ENCODE measurements at regions of chr3 and their contacts with region 1.

Region 1: DNA sequence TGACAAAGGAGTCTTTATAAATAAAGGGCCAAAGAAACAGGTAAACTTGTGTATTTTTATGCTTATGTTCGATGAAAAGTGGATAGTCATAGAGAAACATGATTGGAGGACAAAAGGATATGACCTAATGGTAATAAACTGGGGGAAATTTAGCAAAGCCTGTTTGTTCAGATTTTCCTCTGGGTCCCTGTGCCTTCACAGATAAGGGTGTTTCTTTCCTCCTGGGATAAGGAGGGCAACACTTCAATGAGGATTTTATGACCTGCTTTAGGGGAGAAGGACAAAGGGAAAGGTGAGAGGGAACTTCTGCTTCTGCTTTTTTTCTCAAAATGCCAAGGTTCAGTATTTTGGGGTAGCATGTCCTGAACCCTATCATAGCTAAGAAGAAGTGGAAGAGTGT is 531.3 kb upstream of the ALCAM start:
- DNase-seq: no peak
- ATAC-seq: no peak
- H3K4me3 ChIP-seq: no peak overlapping the region
- H3K4me3 Mint-ChIP-seq: no peak overlapping the region
- H3K27ac ChIP-seq: no peak overlapping the region
- H3K27ac Mint-ChIP-seq: no peak overlapping the region
- H3K4me1 ChIP-seq: no peaks in the 10 kb centered on the region
- H3K4me1 Mint-ChIP-seq: no peaks in the 10 kb centered on the region
- H3K27me3 ChIP-seq: no peaks in the 10 kb centered on the region
- H3K27me3 Mint-ChIP-seq: no peaks in the 10 kb centered on the region
- CTCF ChIP-seq: no peak

Region 2: GRCh38 chr3:104447681-104448080 is 387.7 kb before region 1 on chr3:
- CTCF ChIA-PET with region 1: no interaction called
- POLR2A ChIA-PET with region 1: no interaction called
- intact Hi-C with region 1: no loop called
- DNase-seq: no peak
- ATAC-seq: no peak
- H3K4me3 ChIP-seq: no peak overlapping the region
- H3K4me3 Mint-ChIP-seq: no peak overlapping the region
- H3K27ac ChIP-seq: no peak overlapping the region
- H3K27ac Mint-ChIP-seq: no peak overlapping the region
- H3K4me1 ChIP-seq: no peaks in the 10 kb centered on the region
- H3K4me1 Mint-ChIP-seq: no peaks in the 10 kb centered on the region
- H3K27me3 ChIP-seq: no peaks in the 10 kb centered on the region
- H3K27me3 Mint-ChIP-seq: no peaks in the 10 kb centered on the region
- CTCF ChIP-seq: no peak

Region 3: DNA sequence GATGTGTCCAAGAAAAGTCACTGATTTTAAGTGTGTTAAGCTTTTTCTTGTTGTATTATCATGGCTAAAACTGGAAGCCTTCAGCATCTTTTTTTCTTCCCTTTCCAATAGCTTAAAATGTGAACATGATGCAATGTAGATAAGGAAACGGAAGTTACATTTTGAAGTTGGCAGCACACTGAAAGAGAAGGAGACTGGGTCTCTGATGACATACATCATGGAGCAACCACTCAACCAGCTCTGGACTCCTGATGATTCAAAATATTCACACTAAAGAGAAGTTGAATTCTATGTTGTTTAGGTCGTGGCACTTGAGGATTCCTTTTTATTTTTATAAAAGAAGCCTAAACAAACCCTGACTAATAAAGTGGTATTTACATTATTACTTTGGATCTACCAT is 43.0 kb after region 1 on chr3:
- CTCF ChIA-PET with region 1: no interaction called
- POLR2A ChIA-PET with region 1: no interaction called
- intact Hi-C with region 1: no loop called
- DNase-seq: no peak
- ATAC-seq: no peak
- H3K4me3 ChIP-seq: no peak overlapping the region
- H3K4me3 Mint-ChIP-seq: no peak overlapping the region
- H3K27ac ChIP-seq: no peak overlapping the region
- H3K27ac Mint-ChIP-seq: no peak overlapping the region
- H3K4me1 ChIP-seq: no peaks in the 10 kb centered on the region
- H3K4me1 Mint-ChIP-seq: no peaks in the 10 kb centered on the region
- H3K27me3 ChIP-seq: no peaks in the 10 kb centered on the region
- H3K27me3 Mint-ChIP-seq: no peaks in the 10 kb centered on the region
- CTCF ChIP-seq: no peak

Region 4: GRCh38 chr3:104915873-104916272 is 80.5 kb after region 1 on chr3:
- CTCF ChIA-PET with region 1: no interaction called
- POLR2A ChIA-PET with region 1: no interaction called
- intact Hi-C with region 1: loop called in 1 of 2 experiments (anchors 2 kb)
- DNase-seq: no peak
- ATAC-seq: no peak
- H3K4me3 ChIP-seq: no peak overlapping the region
- H3K4me3 Mint-ChIP-seq: no peak overlapping the region
- H3K27ac ChIP-seq: no peak overlapping the region
- H3K27ac Mint-ChIP-seq: no peak overlapping the region
- H3K4me1 ChIP-seq: no peaks in the 10 kb centered on the region
- H3K4me1 Mint-ChIP-seq: no peaks in the 10 kb centered on the region
- H3K27me3 ChIP-seq: no peaks in the 10 kb centered on the region
- H3K27me3 Mint-ChIP-seq: no peaks in the 10 kb centered on the region
- CTCF ChIP-seq: no peak

Measured in CD4-positive, alpha-beta T cell (primary cell).